Activated T-helper 2 cell treated with anti-CD3 and anti-CD28 coated beads, Interferon-gamma antibody, Interleukin-2, Interleukin-4, amounts not matched to agents 10 μg/mL and 5 μg/mL and 100 μg/mL, durations not matched to agents 14 hours and 24 hours and 36 hours (primary cell): ENCODE measurements at regions of chr10 and their contacts with region 1.

Region 1: DNA sequence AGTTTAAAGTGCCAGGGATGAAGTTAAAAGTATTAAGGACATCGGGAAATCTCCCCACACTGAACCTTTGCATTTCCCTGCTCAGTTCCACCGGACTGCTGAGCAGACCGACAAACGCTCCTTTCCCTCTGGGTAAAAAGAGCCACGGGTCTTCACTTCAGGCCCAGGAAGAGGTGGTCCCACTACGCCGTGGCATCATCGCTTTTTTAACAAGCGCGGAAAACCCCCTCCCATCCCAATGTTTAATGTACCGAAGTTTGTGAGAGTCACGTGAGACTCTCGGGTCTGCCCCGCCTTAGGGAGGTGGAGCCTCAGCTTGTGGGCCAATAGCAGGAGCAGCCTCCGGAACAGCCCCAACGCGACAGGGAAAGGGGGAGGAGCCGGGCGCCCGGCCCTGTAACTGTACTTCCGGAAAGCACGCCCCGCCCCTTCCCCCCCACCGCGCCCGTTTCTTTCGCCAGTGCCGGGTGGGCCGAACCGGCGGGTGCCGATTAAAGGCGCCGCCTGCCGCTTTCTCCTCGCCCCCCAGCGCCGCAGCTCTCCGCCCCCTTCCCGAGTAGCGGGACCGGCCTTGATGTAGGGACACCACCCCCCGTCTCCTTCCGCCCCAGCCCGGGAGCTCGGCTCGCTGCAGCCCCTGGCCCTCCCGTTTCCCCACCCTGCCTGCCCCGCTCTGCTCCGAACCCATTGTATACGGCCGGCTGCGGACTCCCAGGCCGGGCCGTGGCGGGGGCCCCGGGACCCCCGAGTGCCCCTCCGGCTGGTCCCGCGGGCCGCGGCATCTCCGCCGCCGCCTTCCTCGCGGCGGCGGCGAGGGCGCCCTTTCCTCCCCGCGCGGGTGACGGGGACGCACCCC is 2.2 kb upstream of the TRIM8 start:
- DNase-seq: peak; percentile 94
- H3K4me3 Mint-ChIP-seq: peak overlapping the region; percentile 85
- H3K27ac Mint-ChIP-seq: peak overlapping the region; percentile 88
- H3K4me1 Mint-ChIP-seq: peaks cover 18% of the 10 kb centered on the region
- H3K27me3 Mint-ChIP-seq: no peaks in the 10 kb centered on the region

Region 2: GRCh38 chr10:101818119-101818871 is 823.8 kb before region 1 on chr10 and contains the start of gene OGA:
- intact Hi-C with region 1: loop called (anchors 10 kb)
- DNase-seq: peak; percentile 97
- H3K4me3 Mint-ChIP-seq: peak within 1 kb of the TSS; percentile 90
- H3K27ac Mint-ChIP-seq: peak within 1 kb of the TSS; percentile 95
- H3K4me1 Mint-ChIP-seq: peaks cover 40% of the 10 kb centered on the region
- H3K27me3 Mint-ChIP-seq: no peaks in the 10 kb centered on the region
- total RNA-seq, gene OGA: 119 and 122 TPM in 2 replicates

Region 3: GRCh38 chr10:102132563-102133372 is 509.3 kb before region 1 on chr10 and contains the start of gene PPRC1:
- intact Hi-C with region 1: loop called (anchors 10 kb)
- DNase-seq: peak; percentile 98
- H3K4me3 Mint-ChIP-seq: peak within 1 kb of the TSS; percentile 95
- H3K27ac Mint-ChIP-seq: peak within 1 kb of the TSS; percentile 98
- H3K4me1 Mint-ChIP-seq: peaks cover 26% of the 10 kb centered on the region
- H3K27me3 Mint-ChIP-seq: no peaks in the 10 kb centered on the region
- total RNA-seq, gene PPRC1: 91.3 and 94.1 TPM in 2 replicates

Region 4: GRCh38 chr10:102352066-102352715 is 289.9 kb before region 1 on chr10:
- intact Hi-C with region 1: no loop called
- DNase-seq: peak; percentile 38
- H3K4me3 Mint-ChIP-seq: no peak overlapping the region
- H3K27ac Mint-ChIP-seq: no peak overlapping the region
- H3K4me1 Mint-ChIP-seq: no peaks in the 10 kb centered on the region
- H3K27me3 Mint-ChIP-seq: no peaks in the 10 kb centered on the region

Region 5: GRCh38 chr10:102660888-102661657 is 19.0 kb after region 1 on chr10:
- intact Hi-C with region 1: loop called (anchors 1 kb)
- DNase-seq: peak; percentile 65
- H3K4me3 Mint-ChIP-seq: peak overlapping the region; percentile 63
- H3K27ac Mint-ChIP-seq: peak overlapping the region; percentile 90
- H3K4me1 Mint-ChIP-seq: peaks cover 28% of the 10 kb centered on the region
- H3K27me3 Mint-ChIP-seq: no peaks in the 10 kb centered on the region

Region 6: GRCh38 chr10:102673819-102674511 is 31.9 kb after region 1 on chr10:
- intact Hi-C with region 1: loop called (anchors 2 kb)
- DNase-seq: peak; percentile 66
- H3K4me3 Mint-ChIP-seq: peak overlapping the region; percentile 70
- H3K27ac Mint-ChIP-seq: peak overlapping the region; percentile 69
- H3K4me1 Mint-ChIP-seq: peaks cover 30% of the 10 kb centered on the region
- H3K27me3 Mint-ChIP-seq: no peaks in the 10 kb centered on the region

Region 7: GRCh38 chr10:102713814-102714620 is 71.9 kb after region 1 on chr10 and contains the start of gene ARL3:
- intact Hi-C with region 1: loop called (anchors 1 kb)
- DNase-seq: peak; percentile 96
- H3K4me3 Mint-ChIP-seq: peak within 1 kb of the TSS; percentile 92
- H3K27ac Mint-ChIP-seq: peak within 1 kb of the TSS; percentile 92
- H3K4me1 Mint-ChIP-seq: peaks cover 55% of the 10 kb centered on the region
- H3K27me3 Mint-ChIP-seq: no peaks in the 10 kb centered on the region
- total RNA-seq, gene ARL3: 11.1 and 12.2 TPM in 2 replicates